ENCODE measurements at regions of chr6 and their contacts with region 1.

Region 1: GRCh38 chr6:129029778-129030177 is 146.8 kb downstream of the LAMA2 start:
- DNase-seq: no peak
- ATAC-seq: no peak
- H3K4me3 ChIP-seq: no peak overlapping the region
- H3K27ac ChIP-seq: no peak overlapping the region
- H3K4me1 ChIP-seq: no peaks in the 10 kb centered on the region
- H3K27me3 ChIP-seq: no peaks in the 10 kb centered on the region
- CTCF ChIP-seq: no peak
- EP300 ChIP-seq: no peak
- POLR2A ChIP-seq: no peak
- RAD21 ChIP-seq: no peak

Region 2: GRCh38 chr6:127695108-127695507 is 1334.7 kb before region 1 on chr6:
- CTCF ChIA-PET with region 1: no interaction called
- POLR2A ChIA-PET with region 1: no interaction called
- in situ Hi-C with region 1: no loop called
- intact Hi-C with region 1: loop called (anchors 5 kb)
- DNase-seq: no peak
- ATAC-seq: no peak
- H3K4me3 ChIP-seq: no peak overlapping the region
- H3K27ac ChIP-seq: no peak overlapping the region
- H3K4me1 ChIP-seq: no peaks in the 10 kb centered on the region
- H3K27me3 ChIP-seq: no peaks in the 10 kb centered on the region
- CTCF ChIP-seq: no peak
- EP300 ChIP-seq: no peak
- POLR2A ChIP-seq: no peak
- RAD21 ChIP-seq: no peak

Region 3: DNA sequence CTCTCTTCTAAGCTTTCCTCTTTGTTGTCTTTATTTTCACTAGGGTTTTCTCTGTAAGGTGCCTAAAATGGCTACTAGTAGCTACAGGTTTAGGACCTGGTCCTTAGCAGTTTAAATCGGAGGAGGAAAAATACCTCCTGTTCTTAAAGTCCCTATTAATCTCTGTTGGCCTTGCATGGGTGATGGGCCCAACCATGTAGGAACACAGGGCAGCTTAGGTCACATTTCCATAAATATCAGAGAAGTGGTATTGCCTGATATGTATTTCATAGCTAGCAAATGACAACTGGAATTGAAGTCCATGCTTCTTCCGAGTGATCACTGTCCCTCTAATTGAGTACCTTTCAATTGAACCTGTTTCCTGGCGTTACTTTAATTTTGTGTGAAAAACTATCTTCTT is 76.9 kb before region 1 on chr6:
- CTCF ChIA-PET with region 1: no interaction called
- POLR2A ChIA-PET with region 1: no interaction called
- in situ Hi-C with region 1: no loop called
- intact Hi-C with region 1: no loop called
- DNase-seq: no peak
- ATAC-seq: no peak
- H3K4me3 ChIP-seq: no peak overlapping the region
- H3K27ac ChIP-seq: no peak overlapping the region
- H3K4me1 ChIP-seq: no peaks in the 10 kb centered on the region
- H3K27me3 ChIP-seq: no peaks in the 10 kb centered on the region
- CTCF ChIP-seq: no peak
- EP300 ChIP-seq: no peak
- POLR2A ChIP-seq: no peak
- RAD21 ChIP-seq: no peak

Region 4: GRCh38 chr6:128963561-128963960 is 66.2 kb before region 1 on chr6:
- CTCF ChIA-PET with region 1: no interaction called
- POLR2A ChIA-PET with region 1: no interaction called
- in situ Hi-C with region 1: no loop called
- intact Hi-C with region 1: no loop called
- DNase-seq: no peak
- ATAC-seq: no peak
- H3K4me3 ChIP-seq: no peak overlapping the region
- H3K27ac ChIP-seq: no peak overlapping the region
- H3K4me1 ChIP-seq: no peaks in the 10 kb centered on the region
- H3K27me3 ChIP-seq: no peaks in the 10 kb centered on the region
- CTCF ChIP-seq: no peak
- EP300 ChIP-seq: no peak
- POLR2A ChIP-seq: no peak
- RAD21 ChIP-seq: no peak

Measured in HepG2 (cell line).